Panc1 (cell line): ENCODE measurements at regions of chr9 and their contacts with region 1.

Region 1: DNA sequence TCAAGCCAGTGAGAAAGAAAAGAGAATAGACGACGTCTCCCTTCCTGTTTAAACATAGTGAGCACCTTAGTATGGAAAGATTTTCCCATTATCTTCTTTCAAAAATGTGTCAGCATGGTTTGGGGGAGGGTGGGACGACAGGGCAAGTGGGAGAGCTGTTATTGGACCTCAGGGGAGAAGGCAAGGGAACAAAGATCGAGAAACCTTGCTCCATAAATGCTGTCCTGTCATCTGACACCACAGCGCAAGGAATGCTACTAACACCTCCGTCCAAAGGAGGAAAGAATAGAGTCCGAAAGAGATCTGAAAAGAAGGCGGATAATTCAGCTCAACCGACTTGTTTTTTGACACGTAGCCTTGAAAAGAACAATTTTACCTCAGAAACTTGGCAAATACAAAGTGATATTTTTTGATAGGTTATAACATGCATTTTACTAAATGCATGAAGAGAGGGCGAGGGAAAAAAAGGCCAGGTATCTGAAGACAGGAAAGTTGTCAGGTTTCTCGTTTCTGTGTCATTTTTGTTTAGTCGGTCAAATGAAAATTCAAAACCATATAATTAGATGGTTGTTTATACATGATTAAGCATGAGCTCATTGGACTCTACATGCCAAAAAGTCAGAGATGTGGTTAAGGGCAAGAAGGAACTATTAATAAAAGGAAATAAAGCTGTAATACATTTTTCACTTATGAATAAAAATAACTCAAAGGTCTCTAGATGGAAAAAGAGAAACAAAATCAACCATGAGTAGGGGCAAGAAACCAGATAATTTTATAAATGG is 155.7 kb downstream of the GLIS3 start:
- DNase-seq: no peak
- ATAC-seq: peak; percentile 72
- H3K4me3 ChIP-seq: peak overlapping the region; percentile 22 to 54
- H3K27ac ChIP-seq: peak overlapping the region; percentile 78
- H3K4me1 ChIP-seq: no peaks in the 10 kb centered on the region; the same call in 1 of the 2 replicates
- H3K27me3 ChIP-seq: no peaks in the 10 kb centered on the region
- CTCF ChIP-seq: no peak

Region 2: GRCh38 chr9:4048441-4048840 is 95.7 kb before region 1 on chr9:
- CTCF ChIA-PET with region 1: interaction called, 10 read pairs
- POLR2A ChIA-PET with region 1: no interaction called
- in situ Hi-C with region 1: no loop called
- intact Hi-C with region 1: no loop called
- DNase-seq: no peak
- ATAC-seq: no peak
- H3K4me3 ChIP-seq: no peak overlapping the region
- H3K27ac ChIP-seq: no peak overlapping the region
- H3K4me1 ChIP-seq: no peaks in the 10 kb centered on the region
- H3K27me3 ChIP-seq: no peaks in the 10 kb centered on the region
- CTCF ChIP-seq: peak; percentile 42

Region 3: GRCh38 chr9:4297151-4297785 is 153.1 kb after region 1 on chr9:
- CTCF ChIA-PET with region 1: no interaction called
- POLR2A ChIA-PET with region 1: no interaction called
- in situ Hi-C with region 1: no loop called
- intact Hi-C with region 1: loop called (anchors 10 kb)
- DNase-seq: no peak
- ATAC-seq: peak; percentile 68
- H3K4me3 ChIP-seq: peak overlapping the region; percentile 56 to 69
- H3K27ac ChIP-seq: peak overlapping the region; percentile 49
- H3K4me1 ChIP-seq: peaks cover 2% of the 10 kb centered on the region
- H3K27me3 ChIP-seq: no peaks in the 10 kb centered on the region
- CTCF ChIP-seq: peak; percentile 46

Region 4: GRCh38 chr9:4375424-4376200 is 231.5 kb after region 1 on chr9:
- CTCF ChIA-PET with region 1: no interaction called
- POLR2A ChIA-PET with region 1: no interaction called
- in situ Hi-C with region 1: no loop called
- intact Hi-C with region 1: no loop called
- DNase-seq: no peak
- ATAC-seq: no peak
- H3K4me3 ChIP-seq: no peak overlapping the region
- H3K27ac ChIP-seq: no peak overlapping the region
- H3K4me1 ChIP-seq: no peaks in the 10 kb centered on the region
- H3K27me3 ChIP-seq: no peaks in the 10 kb centered on the region
- CTCF ChIP-seq: peak; percentile 40; the same call in 1 of the 2 replicates

Region 5: GRCh38 chr9:4630836-4631235 is 486.7 kb after region 1 on chr9:
- CTCF ChIA-PET with region 1: no interaction called
- POLR2A ChIA-PET with region 1: no interaction called
- in situ Hi-C with region 1: no loop called
- intact Hi-C with region 1: no loop called
- DNase-seq: no peak
- ATAC-seq: no peak
- H3K4me3 ChIP-seq: no peak overlapping the region
- H3K27ac ChIP-seq: no peak overlapping the region
- H3K4me1 ChIP-seq: no peaks in the 10 kb centered on the region
- H3K27me3 ChIP-seq: no peaks in the 10 kb centered on the region
- CTCF ChIP-seq: no peak

Region 6: DNA sequence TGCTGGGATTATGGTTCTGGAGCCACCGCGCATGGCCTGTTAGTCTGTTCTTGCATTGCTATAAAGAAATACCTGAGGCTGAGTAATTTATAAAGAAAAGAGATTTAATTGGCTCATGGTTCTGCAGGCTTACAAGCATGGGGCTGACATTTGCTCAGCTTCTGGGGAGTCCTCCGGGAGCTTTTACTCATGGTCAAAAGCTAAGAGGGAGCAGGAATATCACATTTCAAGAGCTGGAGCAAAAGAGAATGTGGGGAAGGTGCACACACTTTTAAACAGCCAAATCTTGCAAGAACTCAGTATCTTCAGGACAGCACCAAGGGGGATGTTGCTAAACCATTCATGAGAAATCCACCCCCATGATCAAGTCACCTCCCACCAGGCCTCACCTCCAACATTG is 853.1 kb after region 1 on chr9:
- CTCF ChIA-PET with region 1: interaction called, 10 read pairs
- POLR2A ChIA-PET with region 1: no interaction called
- in situ Hi-C with region 1: no loop called
- intact Hi-C with region 1: no loop called
- DNase-seq: no peak
- ATAC-seq: no peak
- H3K4me3 ChIP-seq: no peak overlapping the region
- H3K27ac ChIP-seq: no peak overlapping the region
- H3K4me1 ChIP-seq: no peaks in the 10 kb centered on the region
- H3K27me3 ChIP-seq: no peaks in the 10 kb centered on the region
- CTCF ChIP-seq: no peak